Calu3 (cell line): ENCODE measurements at regions of chr16 and their contacts with region 1.

Region 1: GRCh38 chr16:56700195-56700594 is 17.9 kb downstream of the MT1X start:
- DNase-seq: no peak
- H3K4me3 Mint-ChIP-seq: no peak overlapping the region
- H3K27ac Mint-ChIP-seq: no peak overlapping the region
- H3K4me1 Mint-ChIP-seq: no peaks in the 10 kb centered on the region
- H3K27me3 Mint-ChIP-seq: no peaks in the 10 kb centered on the region
- CTCF ChIP-seq: no peak

Region 2: GRCh38 chr16:56513972-56514371 is 186.2 kb before region 1 on chr16:
- CTCF ChIA-PET with region 1: interaction called, 12 read pairs
- intact Hi-C with region 1: loop called (anchors 1 kb)
- DNase-seq: peak; percentile 59
- H3K4me3 Mint-ChIP-seq: no peak overlapping the region
- H3K27ac Mint-ChIP-seq: no peak overlapping the region
- H3K4me1 Mint-ChIP-seq: peaks cover 7% of the 10 kb centered on the region
- H3K27me3 Mint-ChIP-seq: no peaks in the 10 kb centered on the region
- CTCF ChIP-seq: peak; percentile 52

Region 3: GRCh38 chr16:56576585-56577293 is 123.5 kb before region 1 on chr16:
- CTCF ChIA-PET with region 1: interaction called, 13 read pairs
- intact Hi-C with region 1: loop called (anchors 1 kb)
- DNase-seq: peak; percentile 90
- H3K4me3 Mint-ChIP-seq: no peak overlapping the region
- H3K27ac Mint-ChIP-seq: no peak overlapping the region
- H3K4me1 Mint-ChIP-seq: peaks cover 9% of the 10 kb centered on the region
- H3K27me3 Mint-ChIP-seq: peaks cover 31% of the 10 kb centered on the region
- CTCF ChIP-seq: peak; percentile 81

Region 4: DNA sequence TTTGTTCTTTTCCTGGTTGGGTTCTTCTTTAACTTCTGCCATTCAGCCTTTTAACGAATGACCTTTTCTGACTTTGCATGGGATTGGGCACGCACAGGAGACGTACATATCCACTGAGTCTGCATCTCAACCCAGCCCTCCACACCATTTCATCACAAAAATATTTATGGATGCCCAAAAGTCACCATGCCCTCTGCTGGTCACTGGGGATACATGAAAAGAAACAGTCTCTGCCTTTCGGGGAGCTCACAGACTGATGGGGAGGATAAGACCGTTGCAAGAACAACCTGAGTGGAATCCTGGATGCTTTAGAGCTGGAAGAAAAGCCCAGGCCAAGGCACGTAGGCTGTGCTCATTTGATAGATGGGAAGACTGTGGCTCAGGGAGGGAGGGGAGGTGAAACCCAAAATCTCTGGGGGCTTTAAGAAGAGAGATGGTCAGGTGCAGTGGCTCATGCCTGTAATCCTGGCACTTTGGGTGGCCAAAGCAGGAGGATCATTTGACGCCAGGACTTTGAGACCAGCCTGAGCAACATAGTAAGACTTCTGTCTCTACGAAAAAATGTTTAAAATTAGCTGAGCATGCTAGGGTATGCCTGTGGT is 99.7 kb before region 1 on chr16:
- CTCF ChIA-PET with region 1: interaction called, 71 read pairs
- intact Hi-C with region 1: loop called (anchors 1 kb)
- DNase-seq: peak; percentile 66
- H3K4me3 Mint-ChIP-seq: no peak overlapping the region
- H3K27ac Mint-ChIP-seq: no peak overlapping the region
- H3K4me1 Mint-ChIP-seq: peaks cover 10% of the 10 kb centered on the region
- H3K27me3 Mint-ChIP-seq: peaks cover 56% of the 10 kb centered on the region
- CTCF ChIP-seq: peak; percentile 65

Region 5: GRCh38 chr16:56643080-56643778 is 57.0 kb before region 1 on chr16:
- CTCF ChIA-PET with region 1: interaction called, 19 read pairs
- intact Hi-C with region 1: loop called (anchors 2 kb)
- DNase-seq: peak; percentile 86
- H3K4me3 Mint-ChIP-seq: peak overlapping the region; percentile 60
- H3K27ac Mint-ChIP-seq: peak overlapping the region; percentile 39
- H3K4me1 Mint-ChIP-seq: peaks cover 21% of the 10 kb centered on the region
- H3K27me3 Mint-ChIP-seq: peaks cover 99% of the 10 kb centered on the region
- CTCF ChIP-seq: peak; percentile 70

Region 6: GRCh38 chr16:56673921-56674320 is 26.3 kb before region 1 on chr16:
- CTCF ChIA-PET with region 1: interaction called, 4 read pairs
- intact Hi-C with region 1: loop called (anchors 1 kb)
- DNase-seq: no peak
- H3K4me3 Mint-ChIP-seq: no peak overlapping the region
- H3K27ac Mint-ChIP-seq: no peak overlapping the region
- H3K4me1 Mint-ChIP-seq: no peaks in the 10 kb centered on the region
- H3K27me3 Mint-ChIP-seq: peaks cover 86% of the 10 kb centered on the region
- CTCF ChIP-seq: no peak